T-cell (primary cell): ENCODE measurements at regions of chr17 and their contacts with region 1.

Region 1: DNA sequence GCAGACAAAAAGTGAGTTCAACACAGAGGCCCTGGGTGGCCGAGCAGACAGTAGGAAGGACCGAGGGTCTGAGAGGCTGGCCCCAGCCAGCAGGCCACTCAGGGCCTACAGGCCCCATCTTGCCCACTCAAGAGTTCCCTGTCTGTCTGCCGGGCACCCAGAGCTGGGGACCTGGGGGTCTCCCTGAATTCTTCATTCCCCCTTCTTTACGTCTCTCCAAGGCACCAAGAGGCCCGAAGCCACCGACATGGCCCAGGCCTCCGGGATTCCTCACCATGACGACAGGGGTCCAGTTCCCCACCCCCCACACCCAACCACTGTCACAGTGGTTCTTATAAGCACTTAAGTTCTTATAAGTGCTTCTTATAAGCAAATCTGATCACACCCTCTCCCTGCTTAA is 49.2 kb downstream of the NOS2 start:
- DNase-seq: no peak
- ATAC-seq: no peak
- H3K4me3 ChIP-seq: no peak overlapping the region
- H3K4me3 Mint-ChIP-seq: no peak overlapping the region
- H3K27ac ChIP-seq: no peak overlapping the region
- H3K27ac Mint-ChIP-seq: no peak overlapping the region
- H3K4me1 ChIP-seq: no peaks in the 10 kb centered on the region
- H3K4me1 Mint-ChIP-seq: no peaks in the 10 kb centered on the region
- H3K27me3 ChIP-seq: peaks cover 0 to 4% of the 10 kb centered on the region in 2 experiments
- H3K27me3 Mint-ChIP-seq: peaks cover 0 to 4% of the 10 kb centered on the region in 2 donors

Region 2: GRCh38 chr17:27526604-27527230 is 224.4 kb before region 1 on chr17:
- CTCF ChIA-PET with region 1: no interaction called
- POLR2A ChIA-PET with region 1: no interaction called
- DNase-seq: peak in 8 of 35 experiments; percentile 3 to 37 (median 12)
- ATAC-seq: peak in 3 of 4 experiments; percentile 49 to 66 (median 57)
- H3K4me3 ChIP-seq: no peak overlapping the region
- H3K4me3 Mint-ChIP-seq: no peak overlapping the region
- H3K27ac ChIP-seq: no peak overlapping the region
- H3K27ac Mint-ChIP-seq: peak overlapping the region in 1 of 2 donors; percentile 42
- H3K4me1 ChIP-seq: peaks cover 0 to 8% of the 10 kb centered on the region in 2 experiments
- H3K4me1 Mint-ChIP-seq: peaks cover 29 to 36% (median 32%) of the 10 kb centered on the region in 3 donors
- H3K27me3 ChIP-seq: no peaks in the 10 kb centered on the region
- H3K27me3 Mint-ChIP-seq: no peaks in the 10 kb centered on the region

Region 3: DNA sequence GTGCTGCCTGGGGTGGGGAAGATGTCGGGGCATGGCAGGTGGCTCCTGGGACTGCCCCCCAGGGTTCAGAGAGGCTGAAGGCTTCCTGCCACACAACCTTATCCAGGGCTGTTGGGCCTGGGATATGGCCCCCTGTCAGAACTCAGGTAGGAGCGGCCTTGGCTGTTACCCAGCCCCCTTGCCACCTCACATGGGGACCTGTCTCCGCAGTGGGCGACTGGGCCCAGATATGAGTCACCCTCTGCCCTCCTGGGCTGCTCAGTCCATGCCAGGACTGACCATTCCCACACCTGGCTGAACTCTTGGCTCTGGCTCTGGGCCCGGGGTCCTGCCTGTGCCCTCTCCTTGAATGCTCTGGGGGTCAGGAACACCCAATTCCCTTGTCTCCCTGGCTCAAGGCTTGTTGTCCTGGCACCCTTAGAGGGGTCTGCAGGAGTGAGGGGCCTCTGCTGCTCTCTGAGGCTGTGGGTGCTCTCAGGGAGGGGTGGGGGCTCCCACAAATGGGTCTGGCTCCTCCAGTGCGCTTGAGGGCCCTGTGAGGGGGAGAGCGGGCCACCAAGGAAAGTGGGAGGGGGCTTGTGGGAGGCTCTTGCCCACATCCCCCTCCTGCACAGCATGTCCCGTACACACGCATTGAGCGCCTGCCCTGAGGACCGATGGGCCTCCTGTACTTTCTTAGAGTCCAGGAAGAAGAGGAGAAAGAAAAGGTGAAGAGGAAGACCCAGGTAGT is 84.2 kb before region 1 on chr17:
- CTCF ChIA-PET with region 1: no interaction called
- POLR2A ChIA-PET with region 1: no interaction called
- DNase-seq: peak in 1 of 35 experiments; percentile 13
- ATAC-seq: no peak
- H3K4me3 ChIP-seq: no peak overlapping the region
- H3K4me3 Mint-ChIP-seq: no peak overlapping the region
- H3K27ac ChIP-seq: no peak overlapping the region
- H3K27ac Mint-ChIP-seq: no peak overlapping the region
- H3K4me1 ChIP-seq: no peaks in the 10 kb centered on the region
- H3K4me1 Mint-ChIP-seq: no peaks in the 10 kb centered on the region
- H3K27me3 ChIP-seq: peaks cover 0 to 2% of the 10 kb centered on the region in 2 experiments
- H3K27me3 Mint-ChIP-seq: peaks cover 0 to 4% of the 10 kb centered on the region in 2 donors

Region 4: GRCh38 chr17:27762527-27763305 is 11.6 kb after region 1 on chr17:
- CTCF ChIA-PET with region 1: no interaction called
- POLR2A ChIA-PET with region 1: no interaction called
- DNase-seq: peak in 1 of 35 experiments; percentile 9
- ATAC-seq: no peak
- H3K4me3 ChIP-seq: no peak overlapping the region
- H3K4me3 Mint-ChIP-seq: no peak overlapping the region
- H3K27ac ChIP-seq: no peak overlapping the region
- H3K27ac Mint-ChIP-seq: no peak overlapping the region
- H3K4me1 ChIP-seq: no peaks in the 10 kb centered on the region
- H3K4me1 Mint-ChIP-seq: peaks cover 0 to 2% (median 0%) of the 10 kb centered on the region in 3 donors
- H3K27me3 ChIP-seq: peaks cover 0 to 17% of the 10 kb centered on the region in 2 experiments
- H3K27me3 Mint-ChIP-seq: peaks cover 0 to 3% of the 10 kb centered on the region in 2 donors

Region 5: GRCh38 chr17:27805520-27806146 is 54.5 kb after region 1 on chr17:
- CTCF ChIA-PET with region 1: no interaction called
- POLR2A ChIA-PET with region 1: no interaction called
- DNase-seq: peak; percentile 56 to 92 (median 74)
- ATAC-seq: peak; percentile 64 to 77 (median 66)
- H3K4me3 ChIP-seq: peak overlapping the region; percentile 50 to 66
- H3K4me3 Mint-ChIP-seq: peak overlapping the region; percentile 66 to 87 (median 78)
- H3K27ac ChIP-seq: peak overlapping the region; percentile 65
- H3K27ac Mint-ChIP-seq: peak overlapping the region; percentile 91 to 93
- H3K4me1 ChIP-seq: peaks cover 0 to 35% of the 10 kb centered on the region in 2 experiments
- H3K4me1 Mint-ChIP-seq: peaks cover 31 to 46% (median 41%) of the 10 kb centered on the region in 3 donors
- H3K27me3 ChIP-seq: no peaks in the 10 kb centered on the region
- H3K27me3 Mint-ChIP-seq: peaks cover 0 to 2% of the 10 kb centered on the region in 2 donors

Region 6: GRCh38 chr17:28828294-28829040 is 1077.3 kb after region 1 on chr17:
- CTCF ChIA-PET with region 1: no interaction called
- POLR2A ChIA-PET with region 1: interaction called in 1 of 2 experiments, 11 read pairs
- DNase-seq: no peak
- ATAC-seq: no peak
- H3K4me3 ChIP-seq: no peak overlapping the region
- H3K4me3 Mint-ChIP-seq: no peak overlapping the region
- H3K27ac ChIP-seq: no peak overlapping the region
- H3K27ac Mint-ChIP-seq: no peak overlapping the region
- H3K4me1 ChIP-seq: no peaks in the 10 kb centered on the region
- H3K4me1 Mint-ChIP-seq: peaks cover 6 to 14% (median 13%) of the 10 kb centered on the region in 3 donors
- H3K27me3 ChIP-seq: no peaks in the 10 kb centered on the region
- H3K27me3 Mint-ChIP-seq: no peaks in the 10 kb centered on the region